RWPE1 (cell line): ENCODE measurements at regions of chr2 and their contacts with region 1.

Region 1: DNA sequence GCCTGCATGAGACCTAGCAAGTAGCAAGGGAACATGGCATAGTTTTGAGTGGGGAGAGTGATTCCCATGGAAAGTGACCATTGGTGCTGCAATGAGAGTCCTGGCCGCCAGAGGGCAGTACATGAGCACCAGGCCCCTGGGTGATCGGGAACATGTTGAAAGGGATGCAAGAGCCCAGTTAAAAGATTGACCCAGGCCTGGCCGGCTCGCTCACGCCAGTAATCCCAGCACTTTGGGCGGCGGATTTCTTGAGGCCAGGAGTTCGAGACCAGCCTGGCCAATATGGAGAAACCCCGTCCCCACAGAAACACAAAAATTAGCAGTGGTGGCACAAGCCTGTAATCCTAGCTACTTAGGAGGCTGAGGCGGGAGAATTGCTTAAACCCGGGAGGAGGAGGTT is 22.2 kb downstream of the FAP start:
- DNase-seq: peak; percentile 79
- H3K27ac ChIP-seq: no peak overlapping the region
- CTCF ChIP-seq: peak; percentile 87

Region 2: GRCh38 chr2:162153608-162154224 is 67.3 kb before region 1 on chr2:
- CTCF ChIA-PET with region 1: interaction called, 10 read pairs
- POLR2A ChIA-PET with region 1: no interaction called
- DNase-seq: peak; percentile 60
- H3K27ac ChIP-seq: no peak overlapping the region
- CTCF ChIP-seq: peak; percentile 70

Region 3: GRCh38 chr2:162210385-162210784 is 10.7 kb before region 1 on chr2:
- CTCF ChIA-PET with region 1: interaction called, 10 read pairs
- POLR2A ChIA-PET with region 1: no interaction called
- DNase-seq: no peak
- H3K27ac ChIP-seq: no peak overlapping the region
- CTCF ChIP-seq: no peak

Region 4: GRCh38 chr2:162297925-162298552 is 77.0 kb after region 1 on chr2:
- CTCF ChIA-PET with region 1: interaction called, 57 read pairs
- POLR2A ChIA-PET with region 1: no interaction called
- DNase-seq: peak; percentile 45
- H3K27ac ChIP-seq: no peak overlapping the region
- CTCF ChIP-seq: peak; percentile 79